Spleen (tissue), 13 donors: ENCODE measurements at regions of chr4 and their contacts with region 1.

Region 1: DNA sequence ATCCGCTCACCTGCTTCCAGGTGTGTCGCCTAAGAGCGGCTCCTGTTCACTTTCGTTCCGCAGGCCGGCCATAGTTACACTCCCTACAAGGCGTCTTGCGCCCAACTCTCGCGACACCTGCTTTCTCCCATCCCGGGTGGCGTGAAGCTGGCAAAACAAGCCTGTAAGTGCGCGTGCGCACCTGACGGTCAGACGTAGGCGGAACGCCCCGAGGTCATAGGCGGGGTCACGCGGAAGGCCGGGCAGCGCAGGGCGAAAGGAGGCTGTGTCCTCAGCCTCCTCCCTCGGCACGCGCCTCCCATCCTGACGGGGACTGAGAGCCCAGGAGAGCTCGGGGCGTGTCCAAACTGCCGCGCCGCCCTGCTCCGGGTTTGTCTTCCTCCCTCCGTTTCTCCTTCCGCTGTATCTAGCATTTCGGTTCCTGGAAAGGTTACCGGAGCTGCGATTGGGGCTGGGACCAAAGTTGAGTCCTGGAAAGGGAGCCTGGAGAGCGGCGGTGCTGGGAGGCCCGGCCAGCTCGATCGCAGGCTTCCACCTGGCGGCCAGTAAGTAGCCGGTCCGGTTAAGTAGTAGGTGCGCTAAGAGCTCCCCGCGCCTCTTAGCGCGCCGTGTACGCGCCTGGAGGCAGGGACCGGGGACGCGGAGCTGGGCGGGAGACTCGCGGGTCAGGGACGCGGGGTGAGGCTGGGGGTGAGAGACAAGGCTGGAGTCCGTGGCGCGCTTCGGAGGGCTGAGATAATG is at the starts of genes ABHD18 and MFSD8:
- DNase-seq: peak; percentile 100
- H3K4me3 ChIP-seq: peak within 1 kb of the TSS; percentile 76 to 95 (median 84)
- H3K27ac ChIP-seq: peak within 1 kb of the TSS; percentile 84 to 99 (median 96)
- H3K4me1 ChIP-seq: peaks cover 10 to 75% (median 48%) of the 10 kb centered on the region in 6 donors
- H3K27me3 ChIP-seq: no peaks in the 10 kb centered on the region
- CTCF ChIP-seq: peak in 10 of 11 experiments; percentile 14 to 50 (median 38)
- POLR2A ChIP-seq: peak; percentile 16 to 46 (median 37)
- total RNA-seq, gene ABHD18: 12.9 to 18.4 (median 17.1) TPM
- total RNA-seq, gene MFSD8: 24.2 to 42.5 (median 37.0) TPM

Region 2: GRCh38 chr4:127880764-127881562 is 84.3 kb before region 1 on chr4 and contains the start of gene PLK4:
- intact Hi-C with region 1: loop called (anchors 10 kb)
- DNase-seq: peak; percentile 97
- H3K4me3 ChIP-seq: peak within 1 kb of the TSS; percentile 77 to 100 (median 95)
- H3K27ac ChIP-seq: peak within 1 kb of the TSS; percentile 79 to 87 (median 84)
- H3K4me1 ChIP-seq: peaks cover 5 to 31% (median 19%) of the 10 kb centered on the region in 6 donors
- H3K27me3 ChIP-seq: no peaks in the 10 kb centered on the region
- CTCF ChIP-seq: no peak
- POLR2A ChIP-seq: peak in 1 of 3 donors; percentile 65
- total RNA-seq, gene PLK4: 2.3 to 10.4 (median 5.1) TPM

Region 3: DNA sequence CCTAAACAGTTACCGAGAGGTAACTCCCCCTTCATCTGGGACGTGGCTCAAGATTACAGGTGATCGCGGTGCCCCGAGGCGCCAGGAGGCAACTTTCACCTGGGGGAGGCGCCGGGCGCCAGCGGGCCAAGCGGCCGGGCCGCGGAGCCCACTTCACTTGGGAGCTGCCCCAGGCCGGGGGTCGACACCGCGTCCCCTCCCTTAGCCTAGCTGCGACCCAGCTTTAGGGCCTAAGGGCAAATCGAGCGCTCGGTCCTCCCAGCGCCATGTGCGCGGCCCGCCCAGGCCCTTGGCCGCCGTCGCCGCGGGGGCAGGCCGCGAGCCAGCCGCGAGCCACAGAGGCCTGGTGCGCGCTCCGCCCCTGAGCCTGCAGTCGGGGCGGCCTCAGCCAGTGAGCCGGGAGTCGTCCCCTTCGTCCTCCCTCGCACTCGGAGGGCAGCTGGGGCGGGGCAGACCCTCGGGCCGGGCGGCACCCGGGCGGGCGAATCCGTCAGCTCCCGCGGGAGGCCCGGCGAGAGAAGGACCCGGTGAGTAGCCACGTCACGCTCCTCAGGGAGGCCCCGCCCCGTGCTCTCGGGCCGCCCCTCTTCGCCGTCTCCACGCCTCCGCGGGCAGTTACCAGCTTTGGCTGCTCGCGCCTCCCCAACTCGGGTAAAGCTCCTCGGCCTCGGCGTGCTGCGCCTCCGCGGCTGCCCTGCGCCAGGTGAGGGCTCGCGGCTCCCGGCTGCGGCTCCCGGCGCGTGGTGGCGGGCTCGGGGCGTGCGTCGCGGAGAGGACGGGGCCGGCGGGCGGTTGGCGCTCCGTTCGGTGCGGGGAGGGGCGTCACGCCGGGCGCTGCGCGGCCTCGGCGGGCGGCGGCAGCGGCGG is 95.7 kb after region 1 on chr4 and contains the start of gene LARP1B:
- intact Hi-C with region 1: loop called (anchors 10 kb)
- DNase-seq: peak; percentile 99
- H3K4me3 ChIP-seq: peak within 1 kb of the TSS; percentile 57 to 88 (median 70)
- H3K27ac ChIP-seq: peak within 1 kb of the TSS; percentile 86 to 97 (median 96)
- H3K4me1 ChIP-seq: peaks cover 4 to 23% (median 17%) of the 10 kb centered on the region in 6 donors
- H3K27me3 ChIP-seq: no peaks in the 10 kb centered on the region
- CTCF ChIP-seq: peak in 1 of 11 experiments; percentile 23
- POLR2A ChIP-seq: peak in 2 of 3 donors; percentile 48 to 79
- total RNA-seq, gene LARP1B: 8.5 to 17.8 (median 12.2) TPM